IMR-90 (cell line): ENCODE measurements at regions of chr18 and their contacts with region 1.

Region 1: GRCh38 chr18:49238433-49239042 is 221.9 kb downstream of the DYM start:
- DNase-seq: peak; percentile 51
- ATAC-seq: peak; percentile 71
- H3K4me3 ChIP-seq: no peak overlapping the region
- H3K27ac ChIP-seq: no peak overlapping the region
- H3K4me1 ChIP-seq: peaks cover 2% of the 10 kb centered on the region; the same call in 1 of the 2 replicates
- H3K27me3 ChIP-seq: no peaks in the 10 kb centered on the region
- CTCF ChIP-seq: peak; percentile 72
- POLR2A ChIP-seq: no peak
- RAD21 ChIP-seq: peak; percentile 80

Region 2: GRCh38 chr18:48475635-48476549 is 762.6 kb before region 1 on chr18:
- CTCF ChIA-PET with region 1: no interaction called
- POLR2A ChIA-PET with region 1: no interaction called
- dilution Hi-C with region 1: no loop called
- in situ Hi-C with region 1: loop called (anchors 25 kb)
- intact Hi-C with region 1: loop called (anchors 5 kb)
- DNase-seq: peak; percentile 82
- ATAC-seq: peak; percentile 96
- H3K4me3 ChIP-seq: no peak overlapping the region
- H3K27ac ChIP-seq: no peak overlapping the region
- H3K4me1 ChIP-seq: no peaks in the 10 kb centered on the region
- H3K27me3 ChIP-seq: peaks cover 12% of the 10 kb centered on the region
- CTCF ChIP-seq: peak; percentile 86
- POLR2A ChIP-seq: no peak
- RAD21 ChIP-seq: peak; percentile 97

Region 3: GRCh38 chr18:48777026-48777743 is 461.4 kb before region 1 on chr18:
- CTCF ChIA-PET with region 1: no interaction called
- POLR2A ChIA-PET with region 1: no interaction called
- dilution Hi-C with region 1: no loop called
- in situ Hi-C with region 1: no loop called
- intact Hi-C with region 1: loop called (anchors 5 kb)
- DNase-seq: peak; percentile 20
- ATAC-seq: peak; percentile 50
- H3K4me3 ChIP-seq: no peak overlapping the region
- H3K27ac ChIP-seq: no peak overlapping the region
- H3K4me1 ChIP-seq: peaks cover 39% of the 10 kb centered on the region
- H3K27me3 ChIP-seq: no peaks in the 10 kb centered on the region
- CTCF ChIP-seq: peak; percentile 72
- POLR2A ChIP-seq: no peak
- RAD21 ChIP-seq: peak; percentile 78

Region 4: GRCh38 chr18:48834413-48835031 is 404.0 kb before region 1 on chr18:
- CTCF ChIA-PET with region 1: no interaction called
- POLR2A ChIA-PET with region 1: no interaction called
- dilution Hi-C with region 1: no loop called
- in situ Hi-C with region 1: no loop called
- intact Hi-C with region 1: loop called (anchors 10 kb)
- DNase-seq: peak; percentile 96
- ATAC-seq: peak; percentile 76
- H3K4me3 ChIP-seq: no peak overlapping the region
- H3K27ac ChIP-seq: peak overlapping the region; percentile 35
- H3K4me1 ChIP-seq: peaks cover 30% of the 10 kb centered on the region
- H3K27me3 ChIP-seq: no peaks in the 10 kb centered on the region
- CTCF ChIP-seq: no peak
- POLR2A ChIP-seq: 0 out of 2 replicates have a peak, but pooled peaks have one; percentile 22
- RAD21 ChIP-seq: peak; percentile 41

Region 5: DNA sequence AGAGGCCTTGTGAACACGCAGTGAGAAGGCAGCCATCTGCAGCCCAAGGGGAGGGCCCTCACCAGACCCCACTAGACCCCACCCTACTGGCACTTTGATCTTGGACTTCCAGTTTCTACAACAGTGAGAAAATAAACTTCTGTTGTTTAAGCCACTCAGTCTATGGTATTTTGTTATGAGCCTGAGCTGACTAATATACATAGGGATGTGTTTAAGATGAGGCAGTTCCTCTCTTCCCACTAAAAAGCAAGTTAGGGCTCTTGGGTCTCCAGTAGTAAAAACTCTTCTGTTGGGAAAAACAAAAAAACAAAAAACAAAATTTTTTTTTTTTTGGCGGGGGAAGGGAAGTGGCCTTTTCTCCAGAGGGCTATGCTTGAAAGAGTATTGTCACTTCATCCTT is 54.6 kb before region 1 on chr18:
- CTCF ChIA-PET with region 1: interaction called, 8 read pairs
- POLR2A ChIA-PET with region 1: no interaction called
- dilution Hi-C with region 1: no loop called
- in situ Hi-C with region 1: no loop called
- intact Hi-C with region 1: loop called (anchors 5 kb)
- DNase-seq: peak; percentile 61
- ATAC-seq: peak; percentile 85
- H3K4me3 ChIP-seq: no peak overlapping the region
- H3K27ac ChIP-seq: no peak overlapping the region
- H3K4me1 ChIP-seq: peaks cover 4% of the 10 kb centered on the region
- H3K27me3 ChIP-seq: no peaks in the 10 kb centered on the region
- CTCF ChIP-seq: no peak
- POLR2A ChIP-seq: no peak
- RAD21 ChIP-seq: no peak